Colonic mucosa (tissue), 4 donors: ENCODE measurements at regions of chr1 and their contacts with region 1.

Region 1: GRCh38 chr1:160101037-160101716 is 2.8 kb upstream of the IGSF8 start:
- DNase-seq: peak; percentile 67
- H3K4me3 ChIP-seq: no peak overlapping the region
- H3K27ac ChIP-seq: no peak overlapping the region
- H3K4me1 ChIP-seq: peaks cover 13% of the 10 kb centered on the region
- H3K27me3 ChIP-seq: no peaks in the 10 kb centered on the region
- CTCF ChIP-seq: peak; percentile 82

Region 2: DNA sequence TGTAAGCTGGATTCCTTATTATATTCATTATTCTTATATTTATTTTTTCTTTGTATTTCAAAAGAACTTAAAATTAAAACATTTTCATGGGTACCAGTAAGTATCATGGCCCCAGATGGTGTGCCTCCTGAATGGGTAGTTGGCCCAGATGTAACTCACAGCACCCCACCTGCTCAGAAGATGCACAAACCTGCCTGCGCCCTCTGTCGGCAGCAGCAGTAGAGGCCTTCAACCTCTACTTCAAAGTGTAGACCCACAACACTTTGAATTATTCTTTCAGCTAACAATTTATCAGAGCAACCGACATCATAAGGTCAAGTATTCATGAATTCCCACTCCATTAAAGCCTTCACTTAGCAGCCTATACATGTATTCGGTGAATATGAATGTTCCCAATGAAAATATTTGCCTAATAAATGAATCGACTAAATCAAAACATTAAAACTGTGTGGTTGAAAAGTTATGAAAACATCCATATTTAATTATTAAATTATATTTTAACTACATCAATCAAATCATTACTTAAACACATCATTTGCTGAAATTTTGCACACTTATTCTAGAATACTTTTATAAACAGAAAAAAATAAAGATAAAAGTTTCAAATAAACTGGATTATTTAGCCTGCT is 94.8 kb before region 1 on chr1:
- intact Hi-C with region 1: no loop called
- DNase-seq: peak; percentile 80
- H3K4me3 ChIP-seq: no peak overlapping the region
- H3K27ac ChIP-seq: no peak overlapping the region
- H3K4me1 ChIP-seq: no peaks in the 10 kb centered on the region
- H3K27me3 ChIP-seq: no peaks in the 10 kb centered on the region
- CTCF ChIP-seq: peak; percentile 82

Region 3: DNA sequence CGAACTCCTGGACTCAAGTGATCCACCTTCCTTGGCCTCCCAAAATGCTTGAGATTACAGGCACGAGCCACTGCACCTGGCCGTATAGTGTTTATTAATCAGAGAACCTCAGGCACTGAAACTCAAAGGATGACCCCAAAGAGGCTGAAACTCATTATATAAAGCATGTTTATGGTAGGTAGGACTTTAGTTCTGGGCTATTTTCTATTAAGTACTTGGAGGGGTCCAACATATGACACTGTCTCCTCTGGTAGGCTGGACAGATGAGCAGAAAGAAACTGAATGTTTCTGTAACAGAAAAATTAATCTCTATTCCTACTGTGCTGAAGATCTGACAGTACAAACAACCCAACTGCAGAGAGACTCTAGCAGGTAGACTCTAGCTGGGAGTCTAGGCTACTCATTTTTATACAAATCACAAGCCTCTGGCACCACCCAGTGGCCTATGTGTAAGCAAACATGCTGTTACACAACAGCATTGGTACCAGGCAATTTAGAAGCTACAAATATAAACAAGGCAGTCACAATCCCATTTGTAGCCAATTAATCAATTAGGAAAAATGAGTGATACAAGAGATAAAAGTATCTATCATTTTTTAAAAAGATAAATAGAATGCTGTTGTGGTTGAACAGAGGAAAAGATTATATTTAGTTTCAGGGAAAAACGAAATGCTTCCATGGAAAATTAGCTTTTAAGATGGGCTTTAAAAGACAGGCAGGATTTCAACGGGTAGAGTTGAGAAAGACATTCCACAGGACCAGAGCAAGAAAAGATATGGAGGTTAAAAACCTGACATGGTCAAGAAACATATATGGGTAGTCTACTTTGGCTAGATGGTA is 150.7 kb after region 1 on chr1:
- intact Hi-C with region 1: loop called (anchors 5 kb)
- DNase-seq: peak; percentile 55
- H3K4me3 ChIP-seq: no peak overlapping the region
- H3K27ac ChIP-seq: no peak overlapping the region
- H3K4me1 ChIP-seq: no peaks in the 10 kb centered on the region
- H3K27me3 ChIP-seq: no peaks in the 10 kb centered on the region
- CTCF ChIP-seq: peak; percentile 65